BJ (cell line): ENCODE measurements at regions of chr5 and their contacts with region 1.

Region 1: GRCh38 chr5:68215208-68215897 is at the start of gene PIK3R1:
- DNase-seq: peak; percentile 61
- H3K4me3 ChIP-seq: peak within 1 kb of the TSS; percentile 80
- H3K27me3 ChIP-seq: no peaks in the 10 kb centered on the region
- CTCF ChIP-seq: peak; percentile 54
- polyA plus RNA-seq, gene PIK3R1: 11.8 and 15.1 TPM in 2 replicates

Region 2: GRCh38 chr5:67808340-67808739 is 407.0 kb before region 1 on chr5:
- CTCF ChIA-PET with region 1: no interaction called
- POLR2A ChIA-PET with region 1: interaction called, 10 read pairs
- DNase-seq: no peak
- H3K4me3 ChIP-seq: no peak overlapping the region
- H3K27me3 ChIP-seq: no peaks in the 10 kb centered on the region
- CTCF ChIP-seq: no peak

Region 3: DNA sequence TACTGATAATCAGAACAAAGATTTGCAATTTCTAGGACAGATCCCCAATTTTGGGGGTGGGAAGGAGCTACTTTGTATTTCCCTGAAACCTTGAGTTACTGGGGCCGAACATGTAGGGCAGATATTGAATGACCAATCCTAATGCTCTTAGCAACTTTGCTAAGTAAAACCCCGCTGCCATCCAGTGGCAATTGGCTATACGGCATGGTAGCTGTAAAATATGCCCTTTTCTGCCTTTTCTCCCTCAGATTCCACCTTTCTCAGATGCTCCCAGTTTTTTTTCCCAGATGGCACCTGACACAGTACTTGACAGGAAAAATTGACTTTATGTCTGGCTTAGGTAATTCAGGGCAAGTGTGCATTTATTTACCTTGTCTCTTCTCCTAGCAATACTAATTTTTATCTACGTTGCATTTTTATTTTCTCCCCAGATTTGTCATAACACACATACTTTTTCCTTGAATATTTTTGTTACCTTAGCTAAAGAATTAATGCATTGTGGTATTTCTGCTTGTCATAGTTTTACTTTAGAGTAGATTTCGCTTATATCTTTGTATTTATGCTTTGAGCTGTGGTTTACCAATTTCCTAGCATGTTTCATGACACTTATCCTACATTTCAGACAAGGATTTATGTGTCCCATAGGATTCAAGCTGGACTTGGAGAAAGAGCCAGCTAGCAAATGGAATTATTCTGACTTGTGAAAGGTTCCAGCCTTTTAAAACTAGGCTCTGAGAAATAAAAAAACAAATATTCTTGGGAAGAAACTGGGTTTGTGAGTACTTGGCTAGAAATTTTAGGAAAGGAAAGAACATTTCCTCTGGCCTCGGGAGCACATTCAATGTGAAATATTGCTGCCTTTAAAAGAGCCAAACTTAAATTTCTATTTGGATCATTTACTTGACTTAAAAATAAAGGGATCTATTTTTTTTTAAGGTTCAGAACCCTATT is 37.6 kb after region 1 on chr5:
- CTCF ChIA-PET with region 1: interaction called, 13 read pairs
- POLR2A ChIA-PET with region 1: no interaction called
- DNase-seq: no peak
- H3K4me3 ChIP-seq: no peak overlapping the region
- H3K27me3 ChIP-seq: no peaks in the 10 kb centered on the region
- CTCF ChIP-seq: peak; percentile 77